ENCODE measurements at regions of chr9 and their contacts with region 1.

Region 1: DNA sequence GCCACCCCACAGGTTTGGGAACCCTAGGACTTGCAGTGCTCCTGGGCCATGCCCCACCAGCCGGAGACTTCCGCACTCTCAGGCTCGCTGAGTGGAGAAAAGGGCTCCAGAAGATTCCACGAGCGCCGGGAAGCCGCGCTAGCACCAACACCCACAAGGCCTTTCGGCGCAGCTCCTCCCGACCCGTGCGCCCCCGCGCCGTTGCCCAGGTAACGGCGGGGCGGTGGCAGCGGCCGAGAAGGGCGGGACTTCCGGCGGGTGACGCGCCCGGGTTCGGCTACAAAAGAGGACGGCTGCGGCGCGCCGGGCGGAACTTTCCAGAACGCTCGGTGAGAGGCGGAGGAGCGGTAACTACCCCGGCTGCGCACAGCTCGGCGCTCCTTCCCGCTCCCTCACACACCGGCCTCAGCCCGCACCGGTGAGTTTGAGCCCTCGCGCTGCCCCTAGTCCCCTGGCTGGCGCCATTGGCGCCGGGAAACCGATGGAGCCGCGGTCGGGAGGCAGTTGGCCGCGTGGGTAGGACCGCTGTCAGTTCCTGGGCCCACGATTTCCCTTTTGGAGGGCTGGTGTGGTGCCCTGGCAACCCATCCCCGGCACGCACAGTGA is at the start of gene DNAJA1:
- H3K4me3 Mint-ChIP-seq: peak within 1 kb of the TSS; percentile 90
- H3K27ac Mint-ChIP-seq: peak within 1 kb of the TSS; percentile 92
- H3K4me1 Mint-ChIP-seq: peaks cover 62% of the 10 kb centered on the region
- H3K27me3 Mint-ChIP-seq: no peaks in the 10 kb centered on the region

Region 2: GRCh38 chr9:32449969-32450368 is 575.1 kb before region 1 on chr9:
- intact Hi-C with region 1: no loop called
- H3K4me3 Mint-ChIP-seq: no peak overlapping the region
- H3K27ac Mint-ChIP-seq: no peak overlapping the region
- H3K4me1 Mint-ChIP-seq: no peaks in the 10 kb centered on the region
- H3K27me3 Mint-ChIP-seq: no peaks in the 10 kb centered on the region

Region 3: GRCh38 chr9:33007755-33008154 is 17.3 kb before region 1 on chr9:
- intact Hi-C with region 1: loop called (anchors 2 kb)
- H3K4me3 Mint-ChIP-seq: no peak overlapping the region
- H3K27ac Mint-ChIP-seq: no peak overlapping the region
- H3K4me1 Mint-ChIP-seq: peaks cover 18% of the 10 kb centered on the region
- H3K27me3 Mint-ChIP-seq: no peaks in the 10 kb centered on the region

Region 4: DNA sequence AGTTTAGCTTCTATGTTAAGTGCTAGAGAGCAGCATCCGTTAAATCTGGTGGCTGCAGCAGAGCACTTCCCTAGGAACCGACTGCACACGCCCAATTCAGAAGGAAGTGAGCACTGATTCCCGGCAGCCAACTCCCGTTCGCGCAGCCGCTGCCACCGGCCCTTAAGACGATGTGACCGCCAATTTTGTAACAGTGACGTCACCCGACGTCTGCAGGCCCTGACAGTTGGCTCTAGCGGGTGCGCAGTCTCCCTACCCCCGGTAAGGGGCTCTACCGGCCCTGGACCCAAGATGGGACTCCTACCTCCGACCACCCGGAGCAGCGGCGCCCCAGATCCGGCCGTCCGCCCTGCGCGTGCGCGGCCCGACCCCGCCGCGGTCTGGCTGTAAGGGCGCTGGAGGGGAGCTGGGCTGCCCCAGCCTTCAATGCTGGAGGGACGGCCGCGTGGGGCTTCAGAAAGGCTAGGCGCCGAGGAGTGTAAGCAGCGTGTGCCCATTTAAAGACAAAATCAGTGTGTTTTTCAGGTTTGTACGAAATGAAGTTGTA is 19.1 kb after region 1 on chr9:
- intact Hi-C with region 1: loop called (anchors 2 kb)
- H3K4me3 Mint-ChIP-seq: peak overlapping the region; percentile 77
- H3K27ac Mint-ChIP-seq: peak overlapping the region; percentile 90
- H3K4me1 Mint-ChIP-seq: peaks cover 34% of the 10 kb centered on the region
- H3K27me3 Mint-ChIP-seq: no peaks in the 10 kb centered on the region

Region 5: GRCh38 chr9:33106827-33107621 is 82.0 kb after region 1 on chr9:
- intact Hi-C with region 1: no loop called
- H3K4me3 Mint-ChIP-seq: no peak overlapping the region
- H3K27ac Mint-ChIP-seq: peak overlapping the region; percentile 1
- H3K4me1 Mint-ChIP-seq: peaks cover 20% of the 10 kb centered on the region
- H3K27me3 Mint-ChIP-seq: no peaks in the 10 kb centered on the region